Right lobe of liver (tissue), 6 donors: ENCODE measurements at regions of chr9 and their contacts with region 1.

Region 1: GRCh38 chr9:24672336-24672735 is 126.6 kb upstream of the IZUMO3 start:
- DNase-seq: no peak
- ATAC-seq: no peak
- H3K4me3 ChIP-seq: no peak overlapping the region
- H3K27ac ChIP-seq: no peak overlapping the region
- H3K4me1 ChIP-seq: no peaks in the 10 kb centered on the region
- H3K27me3 ChIP-seq: no peaks in the 10 kb centered on the region
- CTCF ChIP-seq: no peak
- POLR2A ChIP-seq: no peak

Region 2: DNA sequence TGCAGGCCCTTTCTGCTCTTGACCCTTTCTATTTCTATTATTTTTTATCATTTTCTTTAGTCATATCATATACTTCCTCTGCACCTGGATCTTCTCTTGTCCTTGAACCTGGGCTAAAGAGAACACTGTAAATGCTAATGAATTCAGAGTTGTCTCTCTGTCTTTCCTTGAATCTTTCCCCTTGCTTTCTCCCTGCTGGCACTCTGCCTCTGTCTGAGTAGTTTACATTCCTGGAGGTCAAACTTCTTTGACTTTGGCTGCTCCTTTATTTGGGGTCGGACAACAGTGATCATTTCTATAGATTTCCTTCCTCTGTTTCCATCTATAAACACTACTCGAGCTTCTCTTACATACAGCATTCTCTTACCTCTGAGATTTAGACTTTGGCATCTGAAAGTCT is 173.7 kb before region 1 on chr9:
- intact Hi-C with region 1: no loop called
- DNase-seq: no peak
- ATAC-seq: no peak
- H3K4me3 ChIP-seq: no peak overlapping the region
- H3K27ac ChIP-seq: no peak overlapping the region
- H3K4me1 ChIP-seq: no peaks in the 10 kb centered on the region
- H3K27me3 ChIP-seq: no peaks in the 10 kb centered on the region
- CTCF ChIP-seq: no peak
- POLR2A ChIP-seq: no peak

Region 3: GRCh38 chr9:24602693-24603352 is 69.5 kb before region 1 on chr9:
- intact Hi-C with region 1: loop called in 1 of 2 experiments (anchors 10 kb)
- DNase-seq: no peak
- ATAC-seq: no peak
- H3K4me3 ChIP-seq: no peak overlapping the region
- H3K27ac ChIP-seq: no peak overlapping the region
- H3K4me1 ChIP-seq: no peaks in the 10 kb centered on the region
- H3K27me3 ChIP-seq: no peaks in the 10 kb centered on the region
- CTCF ChIP-seq: no peak
- POLR2A ChIP-seq: no peak

Region 4: GRCh38 chr9:24620741-24621140 is 51.6 kb before region 1 on chr9:
- intact Hi-C with region 1: loop called in 1 of 2 experiments (anchors 10 kb)
- DNase-seq: no peak
- ATAC-seq: no peak
- H3K4me3 ChIP-seq: no peak overlapping the region
- H3K27ac ChIP-seq: no peak overlapping the region
- H3K4me1 ChIP-seq: no peaks in the 10 kb centered on the region
- H3K27me3 ChIP-seq: no peaks in the 10 kb centered on the region
- CTCF ChIP-seq: no peak
- POLR2A ChIP-seq: no peak

Region 5: GRCh38 chr9:24817756-24818155 is 145.4 kb after region 1 on chr9:
- intact Hi-C with region 1: no loop called
- DNase-seq: no peak
- ATAC-seq: no peak
- H3K4me3 ChIP-seq: no peak overlapping the region
- H3K27ac ChIP-seq: no peak overlapping the region
- H3K4me1 ChIP-seq: no peaks in the 10 kb centered on the region
- H3K27me3 ChIP-seq: no peaks in the 10 kb centered on the region
- CTCF ChIP-seq: no peak
- POLR2A ChIP-seq: no peak